ENCODE measurements at regions of chr12 and their contacts with region 1.

Region 1: GRCh38 chr12:122078141-122079032 is at the start of gene MLXIP:
- DNase-seq: peak; percentile 92
- H3K4me3 Mint-ChIP-seq: peak within 1 kb of the TSS; percentile 99
- H3K27ac Mint-ChIP-seq: peak within 1 kb of the TSS; percentile 91
- H3K4me1 Mint-ChIP-seq: peaks cover 49% of the 10 kb centered on the region
- H3K27me3 Mint-ChIP-seq: peaks cover 3% of the 10 kb centered on the region

Region 2: DNA sequence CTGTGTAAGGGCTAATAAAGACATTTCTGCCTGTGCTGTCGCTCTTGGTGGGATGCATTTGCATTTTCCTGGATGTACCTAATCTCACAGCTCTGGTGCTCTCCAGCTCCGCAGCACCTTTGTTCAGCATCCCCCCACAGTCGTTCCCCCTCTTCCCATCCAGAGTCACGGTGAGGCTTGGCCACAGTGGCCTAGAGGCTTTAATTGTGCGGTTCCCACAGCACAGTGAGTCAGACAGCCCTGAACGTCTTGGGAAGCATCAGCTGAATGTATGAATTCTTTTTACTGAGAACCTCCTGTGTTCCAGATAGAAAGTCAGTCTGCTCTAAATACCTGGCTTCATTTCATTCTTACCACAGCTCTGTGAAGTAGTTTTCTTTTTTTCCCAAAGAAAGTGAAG is 28.9 kb after region 1 on chr12:
- CTCF ChIA-PET with region 1: interaction called, 16 read pairs
- DNase-seq: no peak
- H3K4me3 Mint-ChIP-seq: no peak overlapping the region
- H3K27ac Mint-ChIP-seq: no peak overlapping the region
- H3K4me1 Mint-ChIP-seq: peaks cover 69% of the 10 kb centered on the region
- H3K27me3 Mint-ChIP-seq: no peaks in the 10 kb centered on the region